GM18951 (cell line): ENCODE measurements at regions of chr20 and their contacts with region 1.

Region 1: GRCh38 chr20:38700146-38700545 is 24.1 kb upstream of the SLC32A1 start:
- POLR2A ChIP-seq: no peak

Region 2: DNA sequence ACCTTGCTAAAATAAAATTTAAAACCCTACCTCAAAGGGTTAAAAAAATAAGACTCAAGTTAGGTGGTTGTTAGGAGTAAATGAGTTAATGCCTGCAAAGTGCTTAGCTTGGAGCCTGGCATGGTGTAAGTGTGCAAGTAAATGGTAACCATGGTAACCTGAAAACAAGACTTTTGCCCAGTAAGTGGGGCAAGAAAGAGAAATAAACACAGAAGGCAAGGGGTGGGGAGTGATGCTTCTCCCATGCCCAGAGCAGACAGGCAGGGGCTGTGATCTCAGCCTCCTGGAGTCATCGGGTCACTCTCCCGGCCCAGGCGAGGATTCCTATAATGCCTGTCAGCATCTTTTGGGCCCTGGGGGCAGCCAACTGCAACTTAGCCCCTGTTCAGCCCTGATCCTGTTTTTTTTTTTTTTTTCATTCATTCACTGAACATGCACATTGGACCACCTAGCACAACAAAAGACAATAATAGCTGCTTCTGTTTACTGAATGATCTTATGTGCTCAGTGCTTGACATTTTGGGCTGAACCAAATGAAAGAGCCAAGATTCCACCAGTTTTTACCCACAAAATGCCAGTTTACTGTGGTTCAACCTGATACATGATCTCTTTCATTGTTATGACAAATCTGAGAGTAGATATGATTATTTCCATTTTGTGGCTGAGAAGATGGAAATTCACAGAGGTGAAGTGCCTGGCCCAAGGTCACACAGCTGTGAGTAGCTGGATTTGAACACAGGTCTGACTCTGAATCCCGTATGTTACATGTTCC is 34.9 kb before region 1 on chr20:
- in situ Hi-C with region 1: loop called (anchors 5 kb)
- POLR2A ChIP-seq: no peak